ENCODE measurements at regions of chr4 and their contacts with region 1.

Region 1: GRCh38 chr4:75940692-75941253 is at the start of gene NAAA:
- DNase-seq: peak; percentile 76 to 91
- ATAC-seq: peak; percentile 82 to 92 (median 88)
- H3K4me3 ChIP-seq: peak within 1 kb of the TSS; percentile 93
- H3K4me3 Mint-ChIP-seq: peak within 1 kb of the TSS; percentile 92
- H3K27ac ChIP-seq: peak within 1 kb of the TSS; percentile 81
- H3K27ac Mint-ChIP-seq: peak within 1 kb of the TSS; percentile 79 to 87
- H3K4me1 ChIP-seq: peaks cover 17% of the 10 kb centered on the region
- H3K4me1 Mint-ChIP-seq: peaks cover 5 to 13% of the 10 kb centered on the region in 2 donors
- H3K27me3 ChIP-seq: no peaks in the 10 kb centered on the region
- H3K27me3 Mint-ChIP-seq: no peaks in the 10 kb centered on the region
- CTCF ChIP-seq: no peak
- total RNA-seq, gene NAAA: 37.8 to 56.3 (median 43.4) TPM

Region 2: GRCh38 chr4:75916091-75916661 is 24.6 kb before region 1 on chr4:
- intact Hi-C with region 1: loop called (anchors 2 kb)
- DNase-seq: peak; percentile 42 to 68
- ATAC-seq: peak; percentile 72 to 87 (median 75)
- H3K4me3 ChIP-seq: no peak overlapping the region
- H3K4me3 Mint-ChIP-seq: no peak overlapping the region
- H3K27ac ChIP-seq: no peak overlapping the region
- H3K27ac Mint-ChIP-seq: no peak overlapping the region
- H3K4me1 ChIP-seq: no peaks in the 10 kb centered on the region
- H3K4me1 Mint-ChIP-seq: no peaks in the 10 kb centered on the region
- H3K27me3 ChIP-seq: no peaks in the 10 kb centered on the region
- H3K27me3 Mint-ChIP-seq: no peaks in the 10 kb centered on the region
- CTCF ChIP-seq: peak; percentile 82

Region 3: DNA sequence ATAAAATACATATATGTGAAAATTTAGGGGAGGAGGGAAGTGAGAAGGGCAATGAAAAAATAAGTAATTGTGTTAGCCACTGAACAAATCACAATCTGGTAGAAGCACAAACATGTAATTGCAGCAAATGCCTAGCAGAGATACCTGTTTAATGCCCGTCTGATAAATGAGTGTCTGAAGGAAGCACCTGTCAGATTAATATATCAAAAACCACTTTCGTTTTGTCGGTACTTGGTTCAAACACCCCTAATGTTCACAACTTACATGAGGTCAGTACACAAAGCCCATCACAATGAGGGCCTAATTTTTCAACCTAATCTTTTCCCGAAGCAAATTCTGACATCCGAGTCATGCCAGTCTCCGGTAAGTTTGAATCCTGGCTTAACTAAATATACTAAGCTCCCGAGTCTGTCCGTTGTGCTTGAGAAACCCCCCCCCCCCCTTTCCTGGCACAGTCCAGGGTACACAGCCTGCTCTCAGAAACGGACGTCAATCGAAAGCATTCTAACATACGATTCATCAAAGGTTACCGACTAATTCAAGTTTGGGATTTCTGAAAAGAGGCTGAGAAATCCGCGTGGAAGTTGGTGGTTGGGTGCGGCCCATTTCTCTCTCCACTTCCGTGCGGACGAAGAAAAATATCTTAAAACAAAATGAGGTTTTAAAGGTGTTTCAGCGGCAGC is 49.2 kb after region 1 on chr4:
- intact Hi-C with region 1: loop called (anchors 2 kb)
- DNase-seq: peak in 1 of 2 donors; percentile 25
- ATAC-seq: no peak
- H3K4me3 ChIP-seq: peak overlapping the region; percentile 91
- H3K4me3 Mint-ChIP-seq: peak overlapping the region; percentile 92
- H3K27ac ChIP-seq: peak overlapping the region; percentile 27
- H3K27ac Mint-ChIP-seq: peak overlapping the region; percentile 78 to 80
- H3K4me1 ChIP-seq: peaks cover 13% of the 10 kb centered on the region
- H3K4me1 Mint-ChIP-seq: peaks cover 24 to 28% of the 10 kb centered on the region in 2 donors
- H3K27me3 ChIP-seq: no peaks in the 10 kb centered on the region
- H3K27me3 Mint-ChIP-seq: peaks cover 2 to 7% of the 10 kb centered on the region in 2 donors
- CTCF ChIP-seq: no peak

Region 4: GRCh38 chr4:76087007-76087769 is 146.4 kb after region 1 on chr4:
- intact Hi-C with region 1: no loop called
- DNase-seq: peak in 1 of 2 donors; percentile 7
- ATAC-seq: peak in 1 of 3 donors; percentile 31
- H3K4me3 ChIP-seq: no peak overlapping the region
- H3K4me3 Mint-ChIP-seq: no peak overlapping the region
- H3K27ac ChIP-seq: no peak overlapping the region
- H3K27ac Mint-ChIP-seq: no peak overlapping the region
- H3K4me1 ChIP-seq: no peaks in the 10 kb centered on the region
- H3K4me1 Mint-ChIP-seq: peaks cover 5 to 11% of the 10 kb centered on the region in 2 donors
- H3K27me3 ChIP-seq: no peaks in the 10 kb centered on the region
- H3K27me3 Mint-ChIP-seq: peaks cover 0 to 14% of the 10 kb centered on the region in 2 donors
- CTCF ChIP-seq: no peak

Region 5: DNA sequence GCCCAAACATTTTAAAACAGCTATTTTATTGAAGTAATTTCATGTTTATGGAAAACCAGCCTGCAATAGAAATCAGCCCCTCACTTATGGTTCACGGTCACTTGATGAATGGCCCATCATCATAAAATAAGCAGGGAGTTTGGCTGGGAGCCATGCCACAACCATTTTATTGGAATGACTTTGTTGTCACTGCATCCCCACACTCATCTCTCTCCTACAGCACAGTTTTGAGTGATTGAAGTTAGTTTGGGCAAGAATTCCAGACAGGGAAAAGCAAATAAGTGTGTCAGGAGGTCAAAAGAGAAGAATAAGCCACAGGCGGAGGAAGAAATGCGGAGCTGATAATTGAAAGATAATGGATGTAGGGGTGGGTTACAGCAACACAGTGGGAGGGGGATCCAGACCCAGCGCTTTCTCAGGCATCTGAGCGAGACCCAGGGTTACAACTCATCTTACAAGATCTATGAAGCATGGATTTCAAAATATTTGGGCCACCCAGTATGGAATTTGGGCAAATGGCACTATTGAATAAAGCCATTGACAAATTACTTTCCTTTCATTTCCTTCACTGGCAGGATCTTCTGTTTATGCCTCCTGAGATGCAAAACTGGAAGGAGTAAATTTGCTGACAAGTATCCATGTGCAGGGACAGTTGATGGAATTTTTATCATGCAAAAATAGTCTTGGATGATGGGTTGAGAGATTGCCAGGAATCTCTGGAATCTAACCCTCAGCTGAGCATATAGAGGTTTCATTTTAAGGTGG is 595.0 kb after region 1 on chr4:
- intact Hi-C with region 1: no loop called
- DNase-seq: no peak
- ATAC-seq: no peak
- H3K4me3 ChIP-seq: no peak overlapping the region
- H3K4me3 Mint-ChIP-seq: no peak overlapping the region
- H3K27ac ChIP-seq: no peak overlapping the region
- H3K27ac Mint-ChIP-seq: no peak overlapping the region
- H3K4me1 ChIP-seq: no peaks in the 10 kb centered on the region
- H3K4me1 Mint-ChIP-seq: no peaks in the 10 kb centered on the region
- H3K27me3 ChIP-seq: no peaks in the 10 kb centered on the region
- H3K27me3 Mint-ChIP-seq: peaks cover 0 to 3% of the 10 kb centered on the region in 2 donors
- CTCF ChIP-seq: no peak

Measured in natural killer cell (primary cell).